ENCODE measurements at regions of chr9 and their contacts with region 1.

Region 1: GRCh38 chr9:89497978-89498851 is at the start of gene SEMA4D:
- DNase-seq: peak; percentile 45
- H3K4me3 ChIP-seq: peak within 1 kb of the TSS; percentile 36 to 46 (median 44)
- H3K27ac ChIP-seq: no peak within 1 kb of the TSS
- H3K4me1 ChIP-seq: peaks cover 5% of the 10 kb centered on the region
- H3K27me3 ChIP-seq: peaks cover 5% of the 10 kb centered on the region
- CTCF ChIP-seq: no peak
- total RNA-seq, gene SEMA4D: 1.7 to 2.3 TPM

Region 2: DNA sequence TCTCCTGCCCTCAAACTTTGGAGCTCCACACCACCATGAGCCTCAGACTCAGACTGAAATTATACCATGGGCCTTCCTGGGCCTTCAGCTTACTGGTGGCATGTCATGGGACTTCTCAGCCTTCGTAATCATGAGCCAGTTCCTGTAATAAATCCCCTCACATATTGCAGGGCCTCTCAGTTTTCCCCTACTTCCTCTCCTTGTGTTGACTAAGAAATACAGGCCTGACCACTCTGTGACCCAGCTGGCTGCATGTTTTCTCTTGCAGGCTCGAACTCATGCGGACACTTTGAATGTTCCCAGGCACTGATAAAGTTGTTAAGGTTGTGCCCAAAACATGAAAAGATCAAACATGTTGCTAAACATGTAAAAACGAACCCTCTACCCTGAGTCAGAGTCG is 293.4 kb before region 1 on chr9:
- CTCF ChIA-PET with region 1: no interaction called
- dilution Hi-C with region 1: no loop called
- in situ Hi-C with region 1: no loop called
- intact Hi-C with region 1: no loop called
- DNase-seq: peak; percentile 17
- H3K4me3 ChIP-seq: no peak overlapping the region
- H3K27ac ChIP-seq: no peak overlapping the region
- H3K4me1 ChIP-seq: no peaks in the 10 kb centered on the region
- H3K27me3 ChIP-seq: no peaks in the 10 kb centered on the region
- CTCF ChIP-seq: no peak

Region 3: DNA sequence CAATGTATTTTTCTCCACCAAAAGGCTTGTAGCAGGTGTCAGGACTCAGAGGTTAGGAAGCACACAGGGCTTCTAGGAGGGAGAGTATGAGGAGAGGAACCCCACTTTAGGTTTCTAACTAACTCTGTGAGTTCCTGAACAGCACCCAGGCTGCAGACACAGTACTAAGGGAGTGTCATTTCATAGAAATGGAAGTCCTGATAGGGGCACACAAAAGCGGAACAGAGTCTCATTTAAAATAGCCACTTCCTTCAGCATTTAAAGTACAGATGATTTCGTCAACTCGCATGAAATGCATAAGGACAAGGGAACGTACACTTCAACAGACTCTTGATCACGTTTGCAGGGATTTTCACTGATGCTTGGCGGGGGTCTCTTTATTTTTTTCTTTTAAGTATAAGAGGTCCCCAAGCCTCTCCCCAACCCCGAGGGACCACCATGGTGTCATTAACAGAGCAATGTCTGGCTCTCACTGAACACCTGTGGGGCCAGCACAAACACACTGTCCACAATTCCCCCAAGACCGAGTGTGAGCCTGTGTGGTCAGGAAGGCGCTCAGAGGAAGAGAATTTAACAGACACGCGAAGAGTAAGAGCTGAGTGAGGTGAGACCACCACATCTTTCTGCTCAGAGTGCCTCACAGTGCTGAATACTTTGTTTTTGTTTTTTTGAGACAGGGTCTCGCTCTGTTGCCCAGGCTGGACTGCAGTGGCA is 97.7 kb before region 1 on chr9:
- CTCF ChIA-PET with region 1: no interaction called
- dilution Hi-C with region 1: loop called (anchors 5 kb)
- in situ Hi-C with region 1: no loop called
- intact Hi-C with region 1: no loop called
- DNase-seq: no peak
- H3K4me3 ChIP-seq: no peak overlapping the region
- H3K27ac ChIP-seq: no peak overlapping the region
- H3K4me1 ChIP-seq: no peaks in the 10 kb centered on the region
- H3K27me3 ChIP-seq: no peaks in the 10 kb centered on the region
- CTCF ChIP-seq: no peak

Measured in mammary epithelial cell (primary cell).